Activated B cell treated with CpG ODN at 0.5 μM for 24 hours (primary cell): ENCODE measurements at regions of chr21 and their contacts with region 1.

Region 1: DNA sequence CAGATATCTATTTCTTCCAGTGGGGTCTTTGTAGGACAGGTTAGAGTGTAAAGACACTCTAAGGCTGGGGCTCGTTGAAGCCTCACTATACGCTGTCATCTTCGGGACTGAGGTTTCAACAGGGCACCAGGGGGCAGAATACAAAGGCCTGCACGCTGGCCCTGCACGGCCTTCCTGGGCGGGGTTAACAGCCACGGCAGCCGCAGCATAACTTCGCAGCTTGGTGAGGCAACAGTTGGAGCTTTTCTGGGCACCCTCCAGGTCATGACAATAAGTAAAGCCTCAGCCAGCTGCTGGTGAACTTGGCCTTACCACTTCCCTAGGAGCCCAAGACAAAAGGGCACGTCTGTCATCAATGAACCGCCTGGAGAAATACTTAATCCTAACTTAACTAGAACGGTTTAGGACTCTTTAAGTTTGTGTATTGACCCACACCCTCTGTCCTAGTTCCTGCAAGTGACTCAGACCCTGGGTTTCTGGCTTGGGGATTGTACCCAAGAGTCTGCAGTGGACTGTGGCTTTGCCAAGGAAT is 2.3 kb upstream of the RUNX1 start:
- DNase-seq: peak; percentile 54
- ATAC-seq: peak; percentile 45
- H3K4me3 Mint-ChIP-seq: peak overlapping the region; percentile 68
- H3K27ac Mint-ChIP-seq: peak overlapping the region; percentile 97
- H3K4me1 Mint-ChIP-seq: peaks cover 60% of the 10 kb centered on the region
- H3K27me3 Mint-ChIP-seq: no peaks in the 10 kb centered on the region
- CTCF ChIP-seq: no peak

Region 2: GRCh38 chr21:34801519-34802132 is 249.7 kb before region 1 on chr21:
- CTCF ChIA-PET with region 1: interaction called, 3 read pairs
- POLR2A ChIA-PET with region 1: interaction called, 5 read pairs
- intact Hi-C with region 1: loop called (anchors 2 kb)
- DNase-seq: no peak
- ATAC-seq: peak; percentile 83
- H3K4me3 Mint-ChIP-seq: no peak overlapping the region
- H3K27ac Mint-ChIP-seq: no peak overlapping the region
- H3K4me1 Mint-ChIP-seq: peaks cover 25% of the 10 kb centered on the region
- H3K27me3 Mint-ChIP-seq: no peaks in the 10 kb centered on the region
- CTCF ChIP-seq: no peak

Region 3: GRCh38 chr21:34986561-34987500 is 64.5 kb before region 1 on chr21:
- CTCF ChIA-PET with region 1: interaction called, 5 read pairs
- POLR2A ChIA-PET with region 1: interaction called, 8 read pairs
- intact Hi-C with region 1: loop called (anchors 1 kb)
- DNase-seq: peak; percentile 36
- ATAC-seq: peak; percentile 74
- H3K4me3 Mint-ChIP-seq: peak overlapping the region; percentile 69
- H3K27ac Mint-ChIP-seq: peak overlapping the region; percentile 78
- H3K4me1 Mint-ChIP-seq: peaks cover 78% of the 10 kb centered on the region
- H3K27me3 Mint-ChIP-seq: no peaks in the 10 kb centered on the region
- CTCF ChIP-seq: no peak

Region 4: DNA sequence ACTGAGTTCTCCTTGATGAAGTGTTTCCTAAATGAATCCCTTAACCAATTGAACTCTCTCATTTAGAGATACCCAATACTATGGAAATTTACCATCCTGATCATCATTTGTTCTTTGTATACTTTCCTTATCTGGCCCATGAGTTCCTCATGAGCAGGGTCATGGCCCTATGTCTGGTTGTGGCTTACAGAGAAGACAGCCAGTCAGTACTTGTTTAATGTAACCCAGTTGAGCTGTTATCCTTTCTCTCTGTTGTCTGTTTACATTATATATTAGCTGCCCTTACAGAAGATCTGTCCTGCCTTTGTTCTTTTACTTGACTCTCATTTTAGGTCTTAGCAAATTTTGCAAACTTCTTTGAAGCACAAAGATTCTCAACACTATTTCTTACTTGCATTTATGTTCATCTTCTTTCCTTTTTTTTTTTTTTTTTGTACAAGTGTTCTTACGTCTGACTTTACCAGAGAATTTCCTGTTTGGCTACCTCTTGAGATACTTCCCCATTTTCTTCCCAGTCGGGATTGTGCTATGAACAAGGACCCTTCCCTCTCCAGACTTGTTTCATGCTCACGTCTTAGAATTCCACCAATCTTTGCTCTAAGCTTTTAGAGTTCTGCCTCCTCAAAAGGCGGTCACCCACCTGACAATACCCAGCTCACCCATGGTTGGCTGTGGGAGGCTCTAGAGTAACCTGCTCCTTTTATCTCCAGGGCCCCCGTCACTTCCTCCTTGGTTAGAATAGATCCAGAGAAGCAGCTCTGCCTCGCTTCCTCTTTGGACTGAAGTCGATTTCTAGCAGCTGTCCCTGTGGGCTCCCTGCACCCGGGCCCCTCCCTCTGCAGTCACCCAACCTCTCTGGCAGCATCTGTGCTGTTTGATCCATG is 51.4 kb after region 1 on chr21:
- CTCF ChIA-PET with region 1: no interaction called
- POLR2A ChIA-PET with region 1: no interaction called
- intact Hi-C with region 1: loop called (anchors 1 kb)
- DNase-seq: peak; percentile 24
- ATAC-seq: peak; percentile 94
- H3K4me3 Mint-ChIP-seq: no peak overlapping the region
- H3K27ac Mint-ChIP-seq: no peak overlapping the region
- H3K4me1 Mint-ChIP-seq: no peaks in the 10 kb centered on the region
- H3K27me3 Mint-ChIP-seq: no peaks in the 10 kb centered on the region
- CTCF ChIP-seq: no peak

Region 5: GRCh38 chr21:35234725-35235124 is 183.4 kb after region 1 on chr21:
- CTCF ChIA-PET with region 1: interaction called, 3 read pairs
- POLR2A ChIA-PET with region 1: no interaction called
- intact Hi-C with region 1: loop called (anchors 2 kb)
- DNase-seq: no peak
- ATAC-seq: peak; percentile 59
- H3K4me3 Mint-ChIP-seq: peak overlapping the region; percentile 41
- H3K27ac Mint-ChIP-seq: peak overlapping the region; percentile 7
- H3K4me1 Mint-ChIP-seq: peaks cover 23% of the 10 kb centered on the region
- H3K27me3 Mint-ChIP-seq: peaks cover 10% of the 10 kb centered on the region
- CTCF ChIP-seq: no peak

Region 6: DNA sequence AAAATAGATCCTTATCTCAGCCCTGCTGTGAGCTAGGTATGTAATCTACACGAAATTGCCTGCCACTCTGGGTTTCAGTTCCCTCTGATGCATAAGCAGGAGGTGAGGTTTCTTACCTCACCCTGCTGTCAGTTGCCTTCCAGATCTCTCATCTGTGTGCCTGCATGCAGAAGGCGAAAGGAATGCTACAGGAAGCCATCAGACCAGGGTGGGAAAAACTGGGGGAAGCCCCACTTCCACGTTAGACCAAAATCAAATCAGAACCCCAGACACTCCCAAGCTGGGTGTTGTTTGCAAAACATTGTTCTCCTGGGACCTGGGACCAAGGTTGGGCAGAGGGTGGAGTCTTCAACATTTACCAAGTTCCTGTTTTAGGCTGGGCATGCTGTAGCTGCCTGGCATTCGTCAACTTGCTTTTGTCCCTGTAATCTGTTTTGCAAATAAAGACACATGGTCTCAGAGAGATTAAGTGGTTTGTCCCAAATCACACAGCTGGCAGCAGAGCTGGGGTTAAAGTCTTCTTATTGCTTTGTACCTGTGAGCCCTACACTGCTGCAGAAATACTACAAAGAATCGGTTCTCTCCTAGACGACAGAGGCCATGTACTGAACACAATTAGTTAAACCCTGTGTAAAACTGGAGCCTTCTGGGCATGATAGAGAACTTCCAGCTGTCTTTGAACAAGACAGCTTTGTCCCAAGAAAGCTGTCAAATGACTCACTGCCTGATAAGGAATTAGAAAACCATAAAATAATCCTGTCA is 387.5 kb after region 1 on chr21:
- CTCF ChIA-PET with region 1: no interaction called
- POLR2A ChIA-PET with region 1: no interaction called
- intact Hi-C with region 1: loop called (anchors 1 kb)
- DNase-seq: peak; percentile 46
- ATAC-seq: peak; percentile 95
- H3K4me3 Mint-ChIP-seq: peak overlapping the region; percentile 71
- H3K27ac Mint-ChIP-seq: peak overlapping the region; percentile 80
- H3K4me1 Mint-ChIP-seq: peaks cover 32% of the 10 kb centered on the region
- H3K27me3 Mint-ChIP-seq: no peaks in the 10 kb centered on the region
- CTCF ChIP-seq: no peak

Region 7: DNA sequence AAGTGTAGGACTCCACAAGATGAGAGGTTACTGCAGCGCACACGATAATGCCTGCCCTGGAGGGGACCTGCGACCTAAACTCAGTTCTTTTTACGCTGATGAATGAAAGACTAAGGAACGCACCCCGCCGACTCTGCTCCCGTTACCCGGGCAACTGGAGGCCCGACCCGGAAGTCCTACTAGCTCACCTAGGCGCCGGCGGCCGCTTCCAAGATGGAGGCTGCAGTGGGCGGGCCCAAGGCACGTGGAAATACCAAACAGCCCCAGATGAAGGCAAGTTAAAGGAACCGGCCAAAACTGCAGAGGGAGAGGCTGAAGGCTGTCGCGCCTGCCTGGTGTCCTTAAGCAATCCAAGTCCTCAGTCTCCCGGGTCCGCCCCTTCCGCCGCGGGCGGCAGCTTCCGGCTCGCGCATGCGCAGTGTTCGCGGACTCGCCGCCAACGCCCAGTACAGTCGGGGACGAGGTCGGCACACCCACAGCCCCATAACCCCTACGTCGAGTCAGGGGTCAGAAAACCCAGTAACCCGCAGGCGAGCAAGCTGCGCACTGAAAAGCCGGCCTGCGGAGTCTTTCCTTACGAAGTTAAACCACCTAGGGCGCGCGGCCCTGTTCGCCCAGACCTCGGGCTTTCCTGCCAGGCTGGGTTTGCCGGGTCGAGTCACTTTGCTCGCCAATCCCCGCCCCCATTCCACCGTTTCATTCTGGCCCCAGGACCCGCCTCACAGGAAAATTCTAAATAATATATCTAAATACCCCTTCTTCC is 1009.0 kb after region 1 on chr21 and contains the start of gene SETD4:
- CTCF ChIA-PET with region 1: interaction called, 3 read pairs
- POLR2A ChIA-PET with region 1: interaction called, 3 read pairs
- intact Hi-C with region 1: loop called (anchors 10 kb)
- DNase-seq: peak; percentile 96
- ATAC-seq: peak; percentile 89
- H3K4me3 Mint-ChIP-seq: peak within 1 kb of the TSS; percentile 95
- H3K27ac Mint-ChIP-seq: peak within 1 kb of the TSS; percentile 96
- H3K4me1 Mint-ChIP-seq: peaks cover 20% of the 10 kb centered on the region
- H3K27me3 Mint-ChIP-seq: no peaks in the 10 kb centered on the region
- CTCF ChIP-seq: no peak
- total RNA-seq, gene SETD4: 31.6 and 40.4 TPM in 2 replicates